MCF 10A (cell line): ENCODE measurements at regions of chr5 and their contacts with region 1.

Region 1: GRCh38 chr5:61658592-61659008 is 326.5 kb downstream of the ZSWIM6 start:
- DNase-seq: peak; percentile 80
- H3K4me3 Mint-ChIP-seq: no peak overlapping the region
- H3K27ac Mint-ChIP-seq: no peak overlapping the region
- H3K4me1 Mint-ChIP-seq: no peaks in the 10 kb centered on the region
- H3K27me3 Mint-ChIP-seq: no peaks in the 10 kb centered on the region
- CTCF ChIP-seq: peak; percentile 94

Region 2: GRCh38 chr5:61055434-61056006 is 603.1 kb before region 1 on chr5:
- CTCF ChIA-PET with region 1: interaction called, 15 read pairs
- POLR2A ChIA-PET with region 1: interaction called, 4 read pairs
- intact Hi-C with region 1: loop called (anchors 2 kb)
- DNase-seq: peak; percentile 51
- H3K4me3 Mint-ChIP-seq: no peak overlapping the region
- H3K27ac Mint-ChIP-seq: no peak overlapping the region
- H3K4me1 Mint-ChIP-seq: peaks cover 33% of the 10 kb centered on the region
- H3K27me3 Mint-ChIP-seq: no peaks in the 10 kb centered on the region
- CTCF ChIP-seq: peak; percentile 60

Region 3: DNA sequence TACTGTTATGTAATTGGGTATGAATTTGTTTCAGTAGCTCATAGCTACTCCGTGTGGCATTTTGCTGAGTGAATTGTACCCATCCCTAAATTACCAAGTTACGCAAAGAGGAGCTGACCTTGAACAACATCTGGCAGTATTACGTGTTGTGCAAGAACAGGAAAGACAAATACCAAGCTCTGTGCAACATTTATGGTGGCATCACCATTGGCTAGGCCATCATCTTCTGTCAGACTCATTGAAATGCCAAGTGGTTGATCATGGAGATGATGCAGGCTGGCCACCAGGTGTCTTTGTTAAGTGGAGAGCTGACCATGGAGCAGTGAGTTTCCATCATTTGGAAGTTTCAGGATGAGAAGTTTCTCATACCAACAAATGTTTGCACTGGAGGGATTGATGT is 311.5 kb before region 1 on chr5:
- CTCF ChIA-PET with region 1: interaction called, 13 read pairs
- POLR2A ChIA-PET with region 1: no interaction called
- intact Hi-C with region 1: no loop called
- DNase-seq: peak; percentile 58
- H3K4me3 Mint-ChIP-seq: no peak overlapping the region
- H3K27ac Mint-ChIP-seq: no peak overlapping the region
- H3K4me1 Mint-ChIP-seq: peaks cover 24% of the 10 kb centered on the region
- H3K27me3 Mint-ChIP-seq: no peaks in the 10 kb centered on the region
- CTCF ChIP-seq: no peak

Region 4: GRCh38 chr5:61647672-61648071 is 10.9 kb before region 1 on chr5:
- CTCF ChIA-PET with region 1: interaction called, 39 read pairs
- POLR2A ChIA-PET with region 1: interaction called, 4 read pairs
- intact Hi-C with region 1: no loop called
- DNase-seq: no peak
- H3K4me3 Mint-ChIP-seq: no peak overlapping the region
- H3K27ac Mint-ChIP-seq: no peak overlapping the region
- H3K4me1 Mint-ChIP-seq: no peaks in the 10 kb centered on the region
- H3K27me3 Mint-ChIP-seq: no peaks in the 10 kb centered on the region
- CTCF ChIP-seq: no peak

Region 5: DNA sequence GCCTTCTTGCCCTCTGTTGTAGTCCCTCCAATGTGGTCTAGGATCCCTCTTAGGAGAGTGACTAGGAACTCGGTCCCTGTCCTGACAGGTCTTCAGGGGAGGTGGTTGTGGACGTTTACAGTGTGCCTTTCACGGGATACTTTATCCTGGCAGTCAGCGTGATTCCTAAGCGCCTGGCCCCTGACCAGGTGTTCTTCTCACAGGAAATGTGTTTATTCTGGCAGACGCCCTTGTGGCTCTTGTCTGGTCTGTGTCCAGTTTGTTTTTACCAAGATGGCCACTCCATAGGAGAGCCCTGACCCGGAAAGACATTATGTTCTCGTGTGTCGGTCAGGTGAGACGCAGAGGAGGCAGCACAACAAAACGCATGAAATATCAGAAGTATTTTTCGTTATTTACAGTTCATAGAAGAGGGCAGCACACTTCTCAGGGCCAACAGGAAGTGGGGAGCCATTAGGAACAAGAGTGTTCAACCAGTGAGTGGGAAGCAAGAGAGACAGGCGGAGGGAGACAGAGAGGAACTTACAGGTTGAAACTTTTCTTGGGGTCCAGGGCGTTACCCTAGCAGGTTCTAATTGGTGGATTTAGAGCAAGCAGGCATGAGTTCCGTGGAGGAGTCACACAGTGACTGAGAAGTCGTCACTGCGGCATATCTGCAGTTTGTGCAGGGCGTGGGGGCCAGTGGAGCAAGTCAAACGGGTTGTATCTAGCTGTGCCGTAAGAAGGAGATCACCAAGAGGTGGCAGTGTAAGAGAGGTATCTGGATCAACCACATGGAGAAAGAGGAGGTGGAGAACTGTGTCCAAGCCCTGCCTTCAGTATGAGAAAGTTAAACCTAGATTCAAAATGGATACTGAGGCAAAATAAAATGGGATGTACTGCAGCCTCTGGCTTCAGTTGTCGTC is 86.3 kb after region 1 on chr5:
- CTCF ChIA-PET with region 1: no interaction called
- POLR2A ChIA-PET with region 1: no interaction called
- intact Hi-C with region 1: no loop called
- DNase-seq: peak; percentile 30
- H3K4me3 Mint-ChIP-seq: no peak overlapping the region
- H3K27ac Mint-ChIP-seq: no peak overlapping the region
- H3K4me1 Mint-ChIP-seq: no peaks in the 10 kb centered on the region
- H3K27me3 Mint-ChIP-seq: no peaks in the 10 kb centered on the region
- CTCF ChIP-seq: no peak

Region 6: DNA sequence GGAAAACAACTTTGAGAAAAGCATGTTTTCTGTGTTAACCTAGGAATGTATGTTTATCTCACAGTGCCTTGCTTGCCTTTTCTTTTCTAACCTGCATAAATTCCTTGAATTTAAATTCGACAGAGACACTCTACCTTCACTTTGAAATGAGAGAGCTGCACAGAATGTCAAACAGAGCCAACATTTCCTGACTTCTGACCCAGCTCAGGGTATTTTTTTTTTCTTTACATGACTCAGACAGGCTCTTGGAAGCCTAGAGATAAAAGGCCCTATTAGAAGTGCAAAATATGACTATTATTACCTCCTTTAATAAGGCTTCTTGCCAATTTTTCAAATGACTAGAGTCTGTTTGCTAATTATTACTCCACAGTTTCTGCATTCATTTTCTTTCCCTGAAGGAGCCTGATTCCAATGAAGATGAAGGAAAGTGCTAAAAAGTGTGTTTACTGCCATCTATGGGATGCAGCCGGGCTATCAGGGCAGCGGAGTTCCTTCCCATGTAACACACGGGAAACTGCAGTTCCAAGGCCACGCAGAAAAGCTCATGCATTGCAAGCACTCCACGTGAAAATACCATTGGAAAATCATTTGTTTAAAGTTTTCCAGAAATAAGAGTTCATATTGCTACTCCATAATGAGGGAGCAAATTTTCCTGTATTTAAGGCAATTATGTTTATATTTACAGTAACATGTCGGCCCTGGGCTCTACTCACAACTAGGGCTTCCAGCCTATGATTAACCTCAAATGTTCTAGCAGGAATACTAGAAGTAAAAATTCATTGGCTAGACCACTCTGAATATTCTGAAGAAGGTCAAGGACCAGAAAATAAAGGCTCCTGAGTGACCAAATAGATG is 159.1 kb after region 1 on chr5:
- CTCF ChIA-PET with region 1: interaction called, 5 read pairs
- POLR2A ChIA-PET with region 1: no interaction called
- intact Hi-C with region 1: loop called (anchors 1 kb)
- DNase-seq: peak; percentile 53
- H3K4me3 Mint-ChIP-seq: no peak overlapping the region
- H3K27ac Mint-ChIP-seq: no peak overlapping the region
- H3K4me1 Mint-ChIP-seq: peaks cover 17% of the 10 kb centered on the region
- H3K27me3 Mint-ChIP-seq: no peaks in the 10 kb centered on the region
- CTCF ChIP-seq: peak; percentile 51